ENCODE measurements at regions of chrX and their contacts with region 1.

Region 1: DNA sequence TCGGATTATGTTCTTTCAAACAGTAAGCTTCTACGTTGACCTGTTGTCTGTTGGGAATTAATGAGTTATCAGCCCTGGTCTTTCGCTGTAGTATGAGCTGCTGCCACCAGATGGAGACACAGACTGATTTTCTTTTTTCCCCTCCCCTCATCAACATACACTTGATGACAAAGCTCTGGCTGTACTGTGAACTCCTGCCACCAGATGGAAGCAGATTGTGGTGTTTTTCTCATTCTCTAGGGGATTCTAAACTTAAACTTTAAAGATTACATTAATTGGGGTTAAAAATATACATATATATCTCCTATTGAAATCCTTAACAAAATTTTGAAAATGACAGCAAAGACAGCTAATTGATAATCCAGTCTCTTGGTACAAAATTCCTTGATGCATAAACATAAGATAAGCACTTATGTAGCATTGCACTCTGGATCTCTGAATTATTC is 44.8 kb downstream of the SMS start:
- DNase-seq: peak in 9 of 10 donors; percentile 37 to 81 (median 60)
- H3K4me3 ChIP-seq: no peak overlapping the region
- H3K27ac ChIP-seq: peak overlapping the region in 1 of 59 donors; percentile 35
- H3K27me3 ChIP-seq: peaks cover 0 to 47% (median 5%) of the 10 kb centered on the region in 45 donors
- CTCF ChIP-seq: peak; percentile 61 to 99 (median 94)

Region 2: GRCh38 chrX:21905269-21905668 is 80.1 kb before region 1 on chrX:
- intact Hi-C with region 1: no loop called
- DNase-seq: no peak
- H3K4me3 ChIP-seq: no peak overlapping the region
- H3K27ac ChIP-seq: no peak overlapping the region
- H3K27me3 ChIP-seq: peaks cover 0 to 49% (median 2%) of the 10 kb centered on the region in 45 donors
- CTCF ChIP-seq: no peak

Region 3: GRCh38 chrX:22192417-22193060 is 207.2 kb after region 1 on chrX:
- intact Hi-C with region 1: loop called in 1 of 2 experiments (anchors 10 kb)
- DNase-seq: peak; percentile 40 to 74 (median 58)
- H3K4me3 ChIP-seq: no peak overlapping the region
- H3K27ac ChIP-seq: no peak overlapping the region
- H3K27me3 ChIP-seq: peaks cover 0 to 83% (median 22%) of the 10 kb centered on the region in 45 donors
- CTCF ChIP-seq: peak; percentile 28 to 82 (median 70)

Measured in dorsolateral prefrontal cortex (tissue), 120 donors.